ENCODE measurements at regions of chr6 and their contacts with region 1.

Region 1: DNA sequence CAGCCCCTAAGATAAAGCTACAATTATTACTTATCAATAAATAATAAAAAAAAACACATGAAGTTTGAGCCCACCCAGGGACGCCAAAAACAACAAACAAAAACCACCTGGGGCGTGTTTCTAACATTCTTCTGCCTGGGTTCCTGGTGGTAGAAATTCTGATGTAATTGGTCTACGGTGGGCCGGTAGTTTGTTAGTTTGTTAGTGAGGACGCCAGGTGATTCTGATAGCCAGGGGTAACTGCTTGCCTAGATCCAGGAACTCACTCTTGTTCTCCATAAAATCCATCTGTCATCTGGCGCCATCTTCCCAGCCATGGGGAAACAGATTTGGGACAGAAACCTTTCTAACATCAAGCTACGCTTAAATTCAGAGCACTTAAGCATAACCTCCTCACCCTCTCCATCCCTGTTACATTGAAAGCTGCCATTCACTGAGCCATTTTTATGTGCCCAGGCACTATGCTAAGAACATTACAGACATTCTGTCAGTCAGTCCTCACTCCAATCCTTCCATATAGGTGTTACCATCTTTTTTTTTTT is 755 bp downstream of the SYCP2L start:
- DNase-seq: no peak
- ATAC-seq: no peak
- H3K4me3 ChIP-seq: no peak overlapping the region
- H3K27ac ChIP-seq: no peak overlapping the region
- H3K4me1 ChIP-seq: no peaks in the 10 kb centered on the region
- H3K27me3 ChIP-seq: peaks cover 9% of the 10 kb centered on the region; the same call in 1 of the 2 replicates
- CTCF ChIP-seq: no peak

Region 2: GRCh38 chr6:10569392-10570127 is 318.0 kb before region 1 on chr6:
- CTCF ChIA-PET with region 1: interaction called, 10 read pairs
- POLR2A ChIA-PET with region 1: no interaction called
- intact Hi-C with region 1: no loop called
- DNase-seq: no peak
- ATAC-seq: no peak
- H3K4me3 ChIP-seq: no peak overlapping the region
- H3K27ac ChIP-seq: no peak overlapping the region
- H3K4me1 ChIP-seq: no peaks in the 10 kb centered on the region
- H3K27me3 ChIP-seq: no peaks in the 10 kb centered on the region
- CTCF ChIP-seq: no peak